SK-N-SH (cell line): ENCODE measurements at regions of chr1 and their contacts with region 1.

Region 1: DNA sequence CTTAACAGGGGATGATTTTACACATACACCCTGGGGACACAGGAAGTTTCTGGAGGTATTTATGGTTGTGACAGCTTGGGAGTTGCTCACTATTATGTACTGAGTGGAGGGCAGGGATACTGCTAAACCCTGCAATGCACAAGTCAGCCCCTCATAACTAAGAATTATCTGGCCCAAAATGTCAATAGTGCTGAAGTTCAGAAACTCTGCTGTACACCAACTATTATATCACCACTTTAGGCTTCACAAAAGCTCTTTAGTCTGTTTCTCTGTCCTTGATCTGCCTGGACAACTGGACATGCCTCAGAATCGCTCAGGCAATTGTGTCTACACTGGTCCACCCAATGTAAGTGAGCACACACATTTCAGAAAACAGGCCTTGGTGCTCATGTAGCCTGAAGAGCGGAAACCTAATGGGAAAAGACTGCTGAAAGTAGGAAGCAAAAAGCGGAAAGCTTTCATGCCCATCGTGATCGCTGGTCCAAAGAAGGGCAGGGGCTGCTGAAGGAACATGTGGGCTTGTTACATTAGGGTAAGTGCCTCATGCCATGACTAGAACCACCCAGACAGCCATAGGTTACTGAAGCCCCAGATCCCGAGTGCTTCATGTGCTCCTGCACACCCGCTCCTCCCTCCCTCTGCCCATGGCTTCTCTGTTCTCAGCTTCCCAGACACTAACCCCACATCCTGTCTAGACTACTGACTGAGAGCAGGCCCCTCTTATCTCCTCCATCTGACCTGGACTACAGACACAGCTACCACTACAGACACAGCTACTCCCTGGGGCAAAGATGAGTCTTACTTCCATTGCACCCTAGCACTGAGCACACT is 73.5 kb downstream of the LRIG2 start:
- DNase-seq: peak; percentile 78
- H3K4me3 ChIP-seq: no peak overlapping the region
- H3K27ac ChIP-seq: peak overlapping the region; percentile 36 to 100
- H3K4me1 ChIP-seq: peaks cover 20 to 51% of the 10 kb centered on the region in 2 experiments
- H3K27me3 ChIP-seq: no peaks in the 10 kb centered on the region
- CTCF ChIP-seq: no peak
- EP300 ChIP-seq: peak; percentile 58 to 96; a peak in 3 of 4 replicates
- RAD21 ChIP-seq: peak; percentile 47

Region 2: GRCh38 chr1:113210248-113210647 is 63.8 kb after region 1 on chr1:
- CTCF ChIA-PET with region 1: interaction called, 3 read pairs
- POLR2A ChIA-PET with region 1: interaction called, 11 read pairs
- DNase-seq: no peak
- H3K4me3 ChIP-seq: no peak overlapping the region
- H3K27ac ChIP-seq: peak overlapping the region in 1 of 2 experiments; percentile 96; a peak in 2 of 4 replicates
- H3K4me1 ChIP-seq: peaks cover 0 to 36% of the 10 kb centered on the region in 2 experiments; a peak in 2 of 4 replicates
- H3K27me3 ChIP-seq: no peaks in the 10 kb centered on the region; the same call in 1 of the 2 replicates
- CTCF ChIP-seq: no peak
- EP300 ChIP-seq: no peak
- RAD21 ChIP-seq: no peak